ENCODE measurements at regions of chr1 and their contacts with region 1.

Region 1: DNA sequence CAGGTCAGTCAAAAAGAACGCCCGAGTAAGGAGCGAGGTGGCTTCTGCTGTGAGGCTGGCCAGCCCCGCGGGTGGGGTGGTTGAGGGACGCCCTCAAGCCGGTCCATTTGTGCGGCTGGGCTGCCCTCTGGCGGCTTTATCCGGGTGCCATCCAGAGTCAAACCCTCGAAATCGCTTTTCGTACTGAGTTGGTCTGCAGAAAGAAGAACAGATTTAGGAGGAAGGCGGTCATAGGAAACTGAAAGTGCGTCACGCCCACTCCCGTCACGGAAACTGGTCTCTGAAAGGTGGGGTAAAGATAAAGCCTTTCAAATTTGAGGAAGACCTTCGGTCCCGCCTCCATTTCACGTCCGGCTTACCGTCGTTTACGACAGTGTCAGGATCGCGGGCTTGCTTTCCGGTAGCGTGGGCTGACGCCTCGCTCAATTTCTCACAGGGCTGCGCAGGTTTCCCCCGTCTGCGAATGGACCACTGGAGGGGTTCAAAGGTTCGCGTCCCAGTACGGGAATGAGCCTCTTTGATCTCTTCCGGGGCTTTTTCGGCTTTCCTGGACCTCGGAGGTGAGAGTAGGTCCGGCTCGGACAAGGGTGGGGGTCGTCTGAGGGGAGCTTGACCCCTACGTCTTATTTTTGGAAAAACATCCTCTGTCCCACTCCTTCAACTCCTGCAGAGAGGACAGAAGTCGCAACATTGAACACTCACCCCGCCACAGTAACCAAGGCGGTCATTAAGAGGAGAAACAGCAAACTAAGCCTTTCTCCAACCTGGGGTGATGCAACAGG is at the start of gene HAX1:
- DNase-seq: peak; percentile 99
- H3K4me3 Mint-ChIP-seq: peak within 1 kb of the TSS; percentile 98
- H3K27ac Mint-ChIP-seq: peak within 1 kb of the TSS; percentile 99
- H3K4me1 Mint-ChIP-seq: peaks cover 40% of the 10 kb centered on the region
- H3K27me3 Mint-ChIP-seq: no peaks in the 10 kb centered on the region
- total RNA-seq, gene HAX1: 204 to 219 TPM

Region 2: GRCh38 chr1:153958111-153958960 is 314.1 kb before region 1 on chr1 and contains the start of gene CRTC2:
- CTCF ChIA-PET with region 1: no interaction called
- intact Hi-C with region 1: loop called (anchors 5 kb)
- DNase-seq: peak; percentile 99
- H3K4me3 Mint-ChIP-seq: peak within 1 kb of the TSS; percentile 86
- H3K27ac Mint-ChIP-seq: peak within 1 kb of the TSS; percentile 92
- H3K4me1 Mint-ChIP-seq: peaks cover 53% of the 10 kb centered on the region
- H3K27me3 Mint-ChIP-seq: no peaks in the 10 kb centered on the region
- total RNA-seq, gene CRTC2: 72.6 to 83.0 TPM

Region 3: DNA sequence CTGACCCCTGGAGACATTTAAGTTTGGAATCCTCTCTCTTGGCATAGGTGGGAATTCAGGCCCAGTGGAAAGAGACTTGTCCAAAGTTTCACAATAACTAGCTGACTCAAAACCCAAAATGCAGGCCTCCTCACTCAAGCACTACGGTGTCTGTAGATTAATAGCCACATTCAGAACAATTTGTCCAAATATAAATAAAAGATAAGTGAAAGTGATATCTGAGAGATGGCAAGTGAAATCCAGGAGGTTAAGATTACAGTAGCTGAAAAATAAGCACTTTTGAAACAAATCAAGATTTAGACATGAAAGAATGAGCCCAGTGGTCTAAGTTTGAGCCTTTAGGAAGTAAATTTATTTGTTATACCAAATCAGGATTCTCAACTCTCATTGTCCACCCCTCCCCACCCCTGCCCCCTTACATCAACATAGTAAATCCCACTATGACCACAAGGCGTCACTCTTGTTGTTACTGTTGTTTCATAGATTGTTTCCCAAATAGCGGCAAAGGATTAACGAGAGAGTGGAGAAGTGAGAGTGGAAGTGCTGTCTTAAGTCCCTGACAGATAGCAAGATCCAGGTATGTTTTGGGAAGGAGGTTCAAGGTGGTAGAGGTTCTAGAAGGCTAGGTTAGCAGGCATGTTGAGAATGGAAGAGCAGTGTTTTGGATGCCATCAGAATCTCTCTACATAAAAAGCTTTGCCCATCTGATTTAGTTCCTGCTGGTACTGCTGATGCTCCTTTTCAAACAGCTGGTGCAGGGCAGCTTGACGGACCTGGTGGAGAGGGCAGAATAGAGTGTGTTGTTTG is 73.4 kb before region 1 on chr1:
- CTCF ChIA-PET with region 1: interaction called, 30 read pairs
- intact Hi-C with region 1: loop called (anchors 1 kb)
- DNase-seq: peak; percentile 69
- H3K4me3 Mint-ChIP-seq: no peak overlapping the region
- H3K27ac Mint-ChIP-seq: no peak overlapping the region
- H3K4me1 Mint-ChIP-seq: no peaks in the 10 kb centered on the region
- H3K27me3 Mint-ChIP-seq: peaks cover 3% of the 10 kb centered on the region

Region 4: GRCh38 chr1:154335025-154335714 is 62.8 kb after region 1 on chr1:
- CTCF ChIA-PET with region 1: interaction called, 29 read pairs
- intact Hi-C with region 1: loop called (anchors 2 kb)
- DNase-seq: peak; percentile 97
- H3K4me3 Mint-ChIP-seq: peak overlapping the region; percentile 30
- H3K27ac Mint-ChIP-seq: peak overlapping the region; percentile 88
- H3K4me1 Mint-ChIP-seq: peaks cover 62% of the 10 kb centered on the region
- H3K27me3 Mint-ChIP-seq: no peaks in the 10 kb centered on the region

Region 5: DNA sequence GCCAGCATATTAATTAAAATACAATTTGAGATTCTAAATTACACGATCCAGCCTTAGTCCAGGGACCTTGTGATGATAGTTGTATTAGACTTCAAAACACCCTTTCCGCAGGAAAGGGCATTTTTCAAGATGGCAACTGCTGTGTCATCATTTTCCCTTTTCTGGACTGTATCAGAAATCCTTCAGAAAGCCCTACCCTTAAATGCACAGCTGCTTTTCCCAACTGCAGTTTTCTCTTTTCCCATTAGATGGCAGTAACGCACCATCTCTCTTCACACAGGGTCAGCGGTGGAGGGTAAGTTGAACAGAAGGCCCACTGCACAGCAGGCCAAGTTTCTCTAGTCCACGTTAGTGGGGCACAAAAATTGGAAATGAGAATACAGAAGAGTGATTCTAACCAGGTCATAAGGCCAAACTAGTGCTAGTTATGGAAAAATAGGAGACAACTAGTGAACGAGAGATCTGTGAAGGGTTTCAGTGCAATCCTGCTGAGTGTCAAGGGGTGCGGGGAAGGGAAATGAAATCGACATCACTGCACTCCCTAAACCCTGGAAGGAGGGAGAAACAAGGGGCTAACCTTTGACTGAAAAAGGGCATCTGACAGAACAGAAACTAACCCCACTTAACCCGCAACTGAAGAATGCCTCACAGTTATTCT is 207.5 kb after region 1 on chr1:
- CTCF ChIA-PET with region 1: interaction called, 3 read pairs
- intact Hi-C with region 1: loop called (anchors 5 kb)
- DNase-seq: peak; percentile 73
- H3K4me3 Mint-ChIP-seq: no peak overlapping the region
- H3K27ac Mint-ChIP-seq: no peak overlapping the region
- H3K4me1 Mint-ChIP-seq: peaks cover 28% of the 10 kb centered on the region
- H3K27me3 Mint-ChIP-seq: no peaks in the 10 kb centered on the region

Measured in activated naive CD4-positive, alpha-beta T cell treated with anti-CD3 and anti-CD28 coated beads for 36 hours (primary cell).